Aorta (tissue), 5 donors: ENCODE measurements at regions of chr2 and their contacts with region 1.

Region 1: GRCh38 chr2:40212804-40213470 is 239.0 kb downstream of the SLC8A1 start:
- DNase-seq: no peak
- ATAC-seq: peak; percentile 69
- H3K4me3 ChIP-seq: no peak overlapping the region
- H3K27ac ChIP-seq: no peak overlapping the region
- H3K4me1 ChIP-seq: no peaks in the 10 kb centered on the region
- H3K27me3 ChIP-seq: no peaks in the 10 kb centered on the region

Region 2: GRCh38 chr2:40144022-40144421 is 68.9 kb before region 1 on chr2:
- intact Hi-C with region 1: loop called in 1 of 2 experiments (anchors 2 kb)
- DNase-seq: no peak
- ATAC-seq: no peak
- H3K4me3 ChIP-seq: no peak overlapping the region
- H3K27ac ChIP-seq: no peak overlapping the region
- H3K4me1 ChIP-seq: no peaks in the 10 kb centered on the region
- H3K27me3 ChIP-seq: no peaks in the 10 kb centered on the region

Region 3: DNA sequence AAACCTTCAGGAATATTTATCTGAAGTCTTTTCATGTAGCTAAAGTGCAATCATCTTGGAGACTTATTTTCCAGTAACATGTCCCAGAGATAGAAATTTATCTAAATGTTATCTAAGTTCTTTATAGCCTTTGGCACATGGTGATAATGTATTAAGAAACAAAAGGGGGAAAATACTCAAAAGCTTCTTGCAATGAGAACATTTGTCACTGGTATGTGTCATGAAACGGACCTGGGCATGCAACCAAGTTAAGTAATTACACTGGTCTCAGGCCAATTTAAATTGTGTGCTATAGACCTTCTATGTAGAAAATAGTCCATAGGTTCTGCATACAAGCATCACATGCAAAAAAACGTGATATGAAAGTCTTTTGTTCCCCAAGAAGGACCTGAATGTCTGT is 102.7 kb after region 1 on chr2:
- intact Hi-C with region 1: no loop called
- DNase-seq: no peak
- ATAC-seq: peak; percentile 59
- H3K4me3 ChIP-seq: no peak overlapping the region
- H3K27ac ChIP-seq: no peak overlapping the region
- H3K4me1 ChIP-seq: peaks cover 0 to 4% of the 10 kb centered on the region in 2 donors
- H3K27me3 ChIP-seq: no peaks in the 10 kb centered on the region

Region 4: GRCh38 chr2:40915651-40916050 is 702.7 kb after region 1 on chr2:
- intact Hi-C with region 1: no loop called
- DNase-seq: no peak
- ATAC-seq: no peak
- H3K4me3 ChIP-seq: no peak overlapping the region
- H3K27ac ChIP-seq: no peak overlapping the region
- H3K4me1 ChIP-seq: peaks cover 0 to 2% of the 10 kb centered on the region in 2 donors
- H3K27me3 ChIP-seq: no peaks in the 10 kb centered on the region